ENCODE measurements at regions of chr21 and their contacts with region 1.

Region 1: DNA sequence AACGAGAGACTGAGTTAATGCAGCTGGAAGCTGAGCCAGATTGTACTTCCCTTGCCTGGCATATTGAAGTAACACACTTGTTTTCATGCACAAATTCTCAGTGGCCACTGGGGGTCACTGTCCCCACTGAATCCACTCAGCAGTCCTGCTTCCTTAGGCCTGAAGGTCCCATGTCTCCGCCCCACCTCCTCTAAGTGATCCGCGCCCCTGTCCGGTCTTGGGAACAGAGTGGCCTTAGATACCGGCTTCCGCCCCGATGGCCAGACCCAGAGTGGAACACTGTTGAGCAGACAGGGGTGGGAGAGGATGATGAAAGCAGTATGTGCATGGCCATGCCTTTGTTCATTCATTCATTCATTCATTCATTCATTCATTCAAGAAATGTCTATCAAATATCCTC is 34.8 kb downstream of the CHAF1B start:
- DNase-seq: peak; percentile 82
- H3K4me3 Mint-ChIP-seq: no peak overlapping the region
- H3K27ac Mint-ChIP-seq: no peak overlapping the region
- H3K4me1 Mint-ChIP-seq: peaks cover 12% of the 10 kb centered on the region
- H3K27me3 Mint-ChIP-seq: no peaks in the 10 kb centered on the region

Region 2: DNA sequence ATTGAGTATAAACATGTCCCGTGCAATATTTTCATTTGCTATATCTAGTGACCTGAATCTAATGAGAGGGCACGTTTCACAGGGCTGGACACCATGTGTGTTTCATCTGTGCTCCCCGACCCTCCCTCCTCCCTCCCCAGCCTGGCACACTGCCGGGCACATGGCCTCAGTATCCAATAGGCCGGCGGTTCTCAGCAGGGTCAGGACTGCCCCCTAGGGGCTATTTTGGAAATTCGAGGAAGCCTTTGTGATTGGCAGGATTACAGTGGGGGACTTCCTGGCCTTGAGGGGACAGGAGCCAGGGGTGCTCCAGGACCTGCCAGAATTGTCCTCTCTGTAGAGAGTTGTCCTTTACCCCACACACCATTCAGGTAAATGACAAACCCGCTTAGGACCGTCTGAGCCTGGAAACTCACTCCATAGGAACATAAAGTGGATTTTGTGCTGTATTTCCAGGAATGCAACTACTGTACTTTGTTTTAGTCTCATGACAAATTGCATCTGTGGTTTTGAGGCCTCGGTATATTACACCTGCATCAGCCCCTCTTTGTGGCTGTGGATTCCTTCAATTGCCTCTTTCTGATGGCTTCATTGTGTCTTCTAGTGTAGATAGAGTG is 169.5 kb after region 1 on chr21:
- intact Hi-C with region 1: loop called (anchors 5 kb)
- DNase-seq: peak; percentile 64
- H3K4me3 Mint-ChIP-seq: no peak overlapping the region
- H3K27ac Mint-ChIP-seq: no peak overlapping the region
- H3K4me1 Mint-ChIP-seq: no peaks in the 10 kb centered on the region
- H3K27me3 Mint-ChIP-seq: peaks cover 2% of the 10 kb centered on the region

Measured in activated CD4-positive, alpha-beta T cell treated with anti-CD3 and anti-CD28 coated beads, Interleukin-2, amount 10 ng/mL, durations not matched to agents 24 days and 14 days (primary cell).